Heart left ventricle (tissue), 16 donors: ENCODE measurements at regions of chr2 and their contacts with region 1.

Region 1: DNA sequence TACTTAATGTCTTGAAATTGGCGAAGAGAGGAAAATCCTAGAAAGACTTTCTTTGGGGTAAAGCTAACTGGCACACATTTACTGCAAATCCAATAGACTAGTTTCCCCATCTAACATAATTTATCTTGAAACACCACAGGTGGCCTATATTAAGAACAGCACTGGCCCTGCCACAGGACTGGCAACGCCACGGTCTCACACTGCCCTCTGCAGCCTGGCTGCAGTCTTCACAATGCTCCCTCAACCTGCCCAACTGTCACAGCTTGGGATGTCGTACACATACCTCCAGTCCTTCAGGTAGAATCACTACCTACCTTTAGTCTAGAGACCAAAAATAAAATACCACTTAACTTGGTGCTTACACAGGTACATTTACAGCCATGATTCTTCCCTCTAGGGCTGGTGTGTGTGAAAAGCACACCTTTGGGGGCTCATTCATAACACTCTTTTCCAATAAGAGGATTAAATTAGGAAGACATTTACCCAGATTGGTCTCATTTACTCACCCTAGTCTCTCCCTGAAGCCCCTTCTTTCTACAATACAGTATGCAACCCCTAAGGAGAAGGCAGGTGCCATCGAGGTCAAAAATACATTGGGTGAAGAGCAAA is 222.2 kb downstream of the C1D start:
- DNase-seq: peak; percentile 61 to 82 (median 70)
- ATAC-seq: peak; percentile 94 to 99 (median 98)
- H3K4me3 ChIP-seq: no peak overlapping the region
- H3K27ac ChIP-seq: no peak overlapping the region
- H3K4me1 ChIP-seq: no peaks in the 10 kb centered on the region
- H3K27me3 ChIP-seq: peaks cover 0 to 4% (median 0%) of the 10 kb centered on the region in 9 donors
- CTCF ChIP-seq: peak; percentile 56 to 84 (median 74)
- POLR2A ChIP-seq: no peak

Region 2: DNA sequence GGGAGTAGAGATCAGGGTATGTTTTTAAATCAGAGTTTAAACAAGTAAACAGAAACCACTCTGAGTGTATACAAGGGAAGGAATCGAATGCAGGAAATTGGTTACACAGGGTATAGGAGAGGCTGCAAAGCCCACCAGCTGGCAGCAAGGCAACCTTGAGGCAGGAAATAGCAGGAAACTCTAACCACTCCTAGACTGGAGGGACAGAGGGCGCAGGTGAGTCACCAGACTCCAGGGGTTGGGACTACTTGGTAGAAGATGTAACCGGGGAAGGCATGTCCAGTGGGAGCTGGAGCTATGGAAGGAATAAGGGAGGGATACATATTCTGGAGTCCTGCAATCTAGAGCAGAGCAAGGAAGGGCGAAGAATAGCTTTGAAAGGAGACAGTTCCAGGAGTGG is 1253.3 kb before region 1 on chr2:
- intact Hi-C with region 1: loop called in 4 of 10 experiments (anchors 5 to 10 kb)
- DNase-seq: no peak
- ATAC-seq: no peak
- H3K4me3 ChIP-seq: no peak overlapping the region
- H3K27ac ChIP-seq: no peak overlapping the region
- H3K4me1 ChIP-seq: peaks cover 0 to under 1% (median 0%) of the 10 kb centered on the region in 12 donors
- H3K27me3 ChIP-seq: peaks cover 3 to 58% (median 26%) of the 10 kb centered on the region in 9 donors
- CTCF ChIP-seq: peak in 1 of 12 donors; percentile 28
- POLR2A ChIP-seq: no peak

Region 3: DNA sequence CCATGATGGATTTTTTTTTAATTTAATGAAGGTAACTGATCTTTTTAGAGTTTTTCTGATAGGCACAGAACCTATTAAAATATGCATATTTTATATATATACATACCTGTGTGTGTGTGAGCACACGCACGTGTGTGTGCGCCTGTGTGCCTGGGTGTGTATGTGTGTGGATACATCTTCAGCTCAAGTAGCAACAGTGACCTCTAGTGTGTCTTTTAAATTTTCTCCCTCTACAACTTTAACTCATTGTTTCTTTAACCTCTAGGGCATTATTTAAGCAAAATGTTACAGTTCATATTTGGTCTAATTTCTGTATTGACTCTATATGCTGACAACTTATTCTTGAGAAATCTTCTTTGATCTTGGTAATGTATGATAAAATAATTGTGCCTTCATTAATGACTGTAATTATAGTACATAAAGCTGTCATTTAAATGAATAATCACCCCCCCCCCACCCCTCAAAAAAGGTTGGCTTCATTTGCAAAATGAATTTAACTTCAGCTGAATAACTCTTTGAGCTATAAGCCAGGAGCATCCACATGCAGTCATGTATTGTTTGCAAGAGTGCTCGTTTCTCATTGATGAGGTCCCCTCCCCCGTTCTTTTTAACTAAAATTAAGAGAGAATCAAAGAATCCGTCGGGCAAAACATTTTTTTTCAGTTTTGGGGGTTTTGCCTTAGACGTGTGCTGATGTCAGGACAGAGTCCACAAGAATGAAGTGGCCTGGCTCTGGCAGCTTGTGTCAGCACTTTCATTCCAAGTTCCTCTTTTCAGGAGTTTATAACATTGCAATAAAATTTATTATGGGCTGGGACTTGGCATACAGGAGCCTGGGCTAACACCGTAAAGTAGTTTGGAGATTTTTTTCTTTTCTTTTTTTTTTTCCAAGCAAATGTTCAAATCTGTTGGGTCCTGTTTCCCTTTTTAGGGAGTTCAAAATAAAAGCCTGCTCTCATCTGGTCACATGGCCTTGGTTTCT is 363.5 kb before region 1 on chr2:
- intact Hi-C with region 1: loop called in 3 of 10 experiments (anchors 10 kb)
- DNase-seq: no peak
- ATAC-seq: peak in 3 of 4 donors; percentile 61 to 67 (median 65)
- H3K4me3 ChIP-seq: no peak overlapping the region
- H3K27ac ChIP-seq: no peak overlapping the region
- H3K4me1 ChIP-seq: peaks cover 0 to 6% (median 0%) of the 10 kb centered on the region in 12 donors
- H3K27me3 ChIP-seq: no peaks in the 10 kb centered on the region
- CTCF ChIP-seq: peak; percentile 13 to 60 (median 40)
- POLR2A ChIP-seq: no peak

Region 4: GRCh38 chr2:67666386-67667053 is 174.0 kb before region 1 on chr2:
- intact Hi-C with region 1: loop called in 2 of 10 experiments (anchors 10 kb)
- DNase-seq: peak in 3 of 5 donors; percentile 25 to 71 (median 42)
- ATAC-seq: peak; percentile 86 to 97 (median 93)
- H3K4me3 ChIP-seq: no peak overlapping the region
- H3K27ac ChIP-seq: peak overlapping the region in 9 of 12 donors; percentile 13 to 85 (median 48)
- H3K4me1 ChIP-seq: peaks cover 0 to 26% (median 10%) of the 10 kb centered on the region in 12 donors
- H3K27me3 ChIP-seq: no peaks in the 10 kb centered on the region
- CTCF ChIP-seq: no peak
- POLR2A ChIP-seq: no peak

Region 5: GRCh38 chr2:67733517-67733916 is 107.0 kb before region 1 on chr2:
- intact Hi-C with region 1: loop called in 1 of 10 experiments (anchors 10 kb)
- DNase-seq: peak in 2 of 5 donors; percentile 15 to 23
- ATAC-seq: peak; percentile 39 to 83 (median 70)
- H3K4me3 ChIP-seq: no peak overlapping the region
- H3K27ac ChIP-seq: no peak overlapping the region
- H3K4me1 ChIP-seq: no peaks in the 10 kb centered on the region
- H3K27me3 ChIP-seq: no peaks in the 10 kb centered on the region
- CTCF ChIP-seq: peak in 5 of 12 donors; percentile 21 to 38 (median 31)
- POLR2A ChIP-seq: no peak

Region 6: DNA sequence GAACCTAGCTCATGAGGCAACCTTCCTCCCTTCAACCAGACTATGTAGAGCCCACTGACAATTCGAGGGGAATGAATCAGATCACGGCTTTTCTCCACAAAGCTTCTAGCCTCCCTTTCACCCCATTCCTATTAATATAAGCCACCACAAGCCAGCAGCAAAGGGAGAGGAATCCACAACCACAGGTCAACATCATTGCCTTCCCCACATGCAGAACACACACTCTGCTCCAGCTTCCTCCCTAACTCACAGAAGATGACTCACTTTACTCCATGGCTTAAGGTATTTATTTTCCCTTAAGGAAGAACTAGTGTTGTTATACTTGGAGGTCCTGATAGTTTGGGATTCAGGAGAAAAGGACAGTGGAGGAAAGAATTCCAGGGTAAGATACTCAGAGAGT is 49.9 kb before region 1 on chr2:
- intact Hi-C with region 1: no loop called
- DNase-seq: no peak
- ATAC-seq: no peak
- H3K4me3 ChIP-seq: no peak overlapping the region
- H3K27ac ChIP-seq: no peak overlapping the region
- H3K4me1 ChIP-seq: no peaks in the 10 kb centered on the region
- H3K27me3 ChIP-seq: no peaks in the 10 kb centered on the region
- CTCF ChIP-seq: no peak
- POLR2A ChIP-seq: no peak

Region 7: GRCh38 chr2:67867735-67868134 is 27.2 kb after region 1 on chr2:
- intact Hi-C with region 1: loop called in 1 of 10 experiments (anchors 1 kb)
- DNase-seq: no peak
- ATAC-seq: no peak
- H3K4me3 ChIP-seq: no peak overlapping the region
- H3K27ac ChIP-seq: no peak overlapping the region
- H3K4me1 ChIP-seq: no peaks in the 10 kb centered on the region
- H3K27me3 ChIP-seq: peaks cover 0 to 22% (median 0%) of the 10 kb centered on the region in 9 donors
- CTCF ChIP-seq: no peak
- POLR2A ChIP-seq: no peak